ENCODE measurements at regions of chr14 and their contacts with region 1.

Region 1: DNA sequence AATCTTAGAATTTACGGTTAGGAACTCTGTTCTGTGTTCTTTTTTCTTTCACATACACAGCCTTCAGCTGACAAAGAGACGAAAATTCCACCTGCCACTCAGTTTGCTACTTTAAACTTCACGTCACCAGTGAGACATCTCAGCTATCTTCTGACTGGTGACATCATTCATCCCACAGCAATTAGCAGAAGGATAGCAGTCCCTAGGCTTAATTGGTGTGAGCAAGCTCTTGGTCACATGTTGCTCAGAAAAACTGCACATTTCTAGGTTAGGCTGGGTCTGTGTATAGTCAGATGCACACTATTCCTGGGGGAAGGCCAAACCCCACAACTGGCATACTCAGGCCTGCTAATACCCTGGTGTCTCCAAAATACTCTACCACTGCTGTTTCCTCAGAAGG is 23.9 kb downstream of the SLC7A7 start:
- DNase-seq: peak; percentile 31
- ATAC-seq: no peak
- H3K4me3 ChIP-seq: no peak overlapping the region
- H3K4me3 Mint-ChIP-seq: peak overlapping the region; percentile 43
- H3K27ac ChIP-seq: peak overlapping the region; percentile 75 to 84
- H3K27ac Mint-ChIP-seq: peak overlapping the region; percentile 78
- H3K4me1 ChIP-seq: peaks cover 43 to 51% of the 10 kb centered on the region in 2 donors
- H3K4me1 Mint-ChIP-seq: peaks cover 59% of the 10 kb centered on the region
- H3K27me3 ChIP-seq: no peaks in the 10 kb centered on the region
- H3K27me3 Mint-ChIP-seq: no peaks in the 10 kb centered on the region
- CTCF ChIP-seq: no peak

Region 2: GRCh38 chr14:20836668-20837338 is 1954.5 kb before region 1 on chr14:
- CTCF ChIA-PET with region 1: no interaction called
- POLR2A ChIA-PET with region 1: no interaction called
- intact Hi-C with region 1: no loop called
- DNase-seq: no peak
- ATAC-seq: no peak
- H3K4me3 ChIP-seq: no peak overlapping the region
- H3K4me3 Mint-ChIP-seq: no peak overlapping the region
- H3K27ac ChIP-seq: no peak overlapping the region
- H3K27ac Mint-ChIP-seq: no peak overlapping the region
- H3K4me1 ChIP-seq: no peaks in the 10 kb centered on the region
- H3K4me1 Mint-ChIP-seq: no peaks in the 10 kb centered on the region
- H3K27me3 ChIP-seq: no peaks in the 10 kb centered on the region
- H3K27me3 Mint-ChIP-seq: no peaks in the 10 kb centered on the region
- CTCF ChIP-seq: no peak

Region 3: DNA sequence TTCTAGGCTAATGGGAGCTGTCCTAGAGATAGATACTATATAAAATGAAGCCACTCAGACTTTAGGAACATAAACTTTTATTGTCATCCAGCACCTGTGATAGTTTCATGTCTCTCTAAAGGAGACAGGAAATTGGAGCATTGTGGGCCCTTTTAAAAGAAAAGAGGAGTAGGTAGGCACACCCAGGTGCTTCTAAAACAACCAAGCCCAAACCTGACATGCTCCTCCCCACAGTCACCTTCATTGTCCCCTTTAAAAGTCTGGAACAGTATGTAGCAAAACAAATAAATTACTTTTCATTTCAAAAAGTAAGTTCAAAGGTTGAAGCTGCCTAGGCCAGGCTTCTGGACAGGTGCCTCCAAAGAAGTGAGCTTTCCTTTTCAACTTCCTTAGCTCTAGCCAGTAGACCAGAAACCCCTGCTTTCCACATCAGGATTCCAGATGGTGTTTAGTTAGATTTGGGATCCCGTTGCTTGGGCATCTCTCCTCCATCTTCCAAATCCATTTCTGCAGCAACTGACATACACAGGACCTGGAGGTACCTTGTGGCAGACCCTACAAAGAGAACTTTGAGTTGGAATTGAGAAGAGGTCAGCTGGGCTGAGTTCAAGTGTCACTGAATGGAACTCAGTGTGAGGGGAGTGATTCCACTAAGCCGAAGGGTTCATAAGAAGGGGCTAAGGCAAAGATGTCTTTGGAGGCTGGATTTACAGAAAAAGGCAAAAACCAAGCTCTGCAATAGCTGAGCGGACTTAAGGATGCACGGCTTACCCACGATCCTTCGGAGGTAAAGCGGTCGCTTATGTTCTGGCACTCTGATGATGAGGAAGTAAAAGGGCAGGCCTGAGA is 17.9 kb before region 1 on chr14:
- CTCF ChIA-PET with region 1: interaction called, 17 read pairs
- POLR2A ChIA-PET with region 1: interaction called, 3 read pairs
- intact Hi-C with region 1: loop called (anchors 2 kb)
- DNase-seq: no peak
- ATAC-seq: no peak
- H3K4me3 ChIP-seq: no peak overlapping the region
- H3K4me3 Mint-ChIP-seq: no peak overlapping the region
- H3K27ac ChIP-seq: peak overlapping the region in 1 of 2 donors; percentile 26
- H3K27ac Mint-ChIP-seq: peak overlapping the region; percentile 39
- H3K4me1 ChIP-seq: peaks cover 0 to 2% of the 10 kb centered on the region in 2 donors
- H3K4me1 Mint-ChIP-seq: peaks cover 12% of the 10 kb centered on the region
- H3K27me3 ChIP-seq: no peaks in the 10 kb centered on the region
- H3K27me3 Mint-ChIP-seq: no peaks in the 10 kb centered on the region
- CTCF ChIP-seq: no peak

Region 4: DNA sequence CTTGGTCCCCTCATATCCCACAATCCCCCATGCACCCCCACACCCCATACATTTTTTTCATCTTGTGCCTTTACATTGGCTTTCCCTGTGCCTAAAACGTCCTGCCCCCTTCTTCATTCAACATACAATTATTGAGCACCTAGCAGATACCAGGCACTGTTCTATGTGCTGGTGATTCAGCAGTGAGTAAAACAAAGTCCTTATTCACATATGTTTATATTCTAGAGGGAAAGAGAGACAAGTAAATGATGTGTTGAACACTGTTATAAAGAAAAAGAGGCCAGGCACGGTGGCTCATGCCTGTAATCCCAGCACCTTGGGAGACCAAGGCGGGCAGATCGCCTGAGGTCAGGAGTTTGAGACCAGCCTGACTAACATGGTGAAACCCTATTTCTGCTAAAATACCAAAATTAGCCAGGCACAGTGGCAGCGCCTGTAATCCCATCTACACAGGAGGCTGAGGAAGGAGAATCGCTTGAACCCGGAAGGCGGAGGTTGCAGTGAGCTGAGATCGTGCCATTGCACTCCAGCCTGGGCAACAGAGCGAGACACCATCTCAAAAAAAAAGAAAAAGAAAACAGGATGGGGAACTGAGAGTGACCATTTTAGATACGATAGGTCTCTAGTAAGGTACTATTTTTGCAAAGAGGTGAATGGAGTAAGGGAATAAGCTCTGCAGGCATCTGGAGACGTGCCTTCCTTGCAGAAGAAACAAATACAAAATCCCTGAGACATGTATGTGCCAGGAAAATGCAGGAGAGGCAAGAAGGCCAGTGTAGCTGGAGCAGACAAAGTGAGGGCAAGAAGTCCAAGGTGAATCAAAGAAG is 11.8 kb after region 1 on chr14:
- CTCF ChIA-PET with region 1: interaction called, 29 read pairs
- POLR2A ChIA-PET with region 1: interaction called, 9 read pairs
- intact Hi-C with region 1: loop called (anchors 1 kb)
- DNase-seq: peak; percentile 55
- ATAC-seq: peak; percentile 85
- H3K4me3 ChIP-seq: peak overlapping the region in 1 of 5 experiments; percentile 5
- H3K4me3 Mint-ChIP-seq: peak overlapping the region; percentile 82
- H3K27ac ChIP-seq: peak overlapping the region; percentile 1 to 71
- H3K27ac Mint-ChIP-seq: peak overlapping the region; percentile 94
- H3K4me1 ChIP-seq: peaks cover 25 to 47% of the 10 kb centered on the region in 2 donors
- H3K4me1 Mint-ChIP-seq: peaks cover 79% of the 10 kb centered on the region
- H3K27me3 ChIP-seq: no peaks in the 10 kb centered on the region
- H3K27me3 Mint-ChIP-seq: no peaks in the 10 kb centered on the region
- CTCF ChIP-seq: no peak

Region 5: GRCh38 chr14:22808388-22809209 is 17.3 kb after region 1 on chr14:
- CTCF ChIA-PET with region 1: interaction called, 29 read pairs
- POLR2A ChIA-PET with region 1: interaction called, 10 read pairs
- intact Hi-C with region 1: loop called (anchors 1 kb)
- DNase-seq: no peak
- ATAC-seq: no peak
- H3K4me3 ChIP-seq: no peak overlapping the region
- H3K4me3 Mint-ChIP-seq: peak overlapping the region; percentile 47
- H3K27ac ChIP-seq: peak overlapping the region in 1 of 2 donors; percentile 35
- H3K27ac Mint-ChIP-seq: peak overlapping the region; percentile 76
- H3K4me1 ChIP-seq: peaks cover 35 to 52% of the 10 kb centered on the region in 2 donors
- H3K4me1 Mint-ChIP-seq: peaks cover 72% of the 10 kb centered on the region
- H3K27me3 ChIP-seq: no peaks in the 10 kb centered on the region
- H3K27me3 Mint-ChIP-seq: no peaks in the 10 kb centered on the region
- CTCF ChIP-seq: no peak

Region 6: DNA sequence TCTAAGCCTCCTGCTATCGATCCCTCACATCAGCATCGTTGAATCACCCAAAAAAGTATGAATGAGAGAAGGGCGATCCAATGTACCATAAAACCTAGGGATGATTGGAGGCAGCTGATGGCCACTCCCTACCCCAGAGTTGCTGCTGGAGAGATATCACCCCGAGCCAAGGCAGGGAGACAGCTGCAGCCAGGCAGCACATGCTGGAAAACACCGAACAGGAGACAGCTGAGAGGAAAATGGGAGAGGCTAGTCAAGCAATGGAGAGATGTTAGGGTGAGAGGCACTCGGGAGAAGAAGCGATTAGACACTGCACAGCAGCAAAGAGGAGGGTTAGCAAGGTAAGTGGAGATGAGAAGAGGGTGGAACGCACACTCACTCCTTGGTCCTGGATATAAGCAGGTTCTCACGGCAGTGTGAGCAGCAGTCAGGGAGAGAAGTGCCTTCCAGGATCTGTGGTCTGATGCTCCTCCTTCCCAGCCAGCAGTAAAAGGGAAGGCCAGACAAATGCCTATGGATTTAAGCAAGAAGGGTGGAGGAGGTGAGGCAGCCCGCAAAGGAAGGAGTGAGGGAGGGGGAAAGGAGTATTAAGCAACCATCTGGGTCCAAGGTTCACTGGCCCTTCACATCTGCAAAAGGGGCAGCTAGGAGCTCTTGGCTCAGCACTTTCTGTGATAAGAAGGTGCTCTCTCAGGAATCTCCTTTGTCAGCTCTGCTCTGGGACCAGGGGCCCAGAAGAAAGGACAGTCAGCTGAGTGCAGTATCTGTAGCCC is 23.8 kb after region 1 on chr14 and contains the start of gene SLC7A7:
- CTCF ChIA-PET with region 1: interaction called, 10 read pairs
- POLR2A ChIA-PET with region 1: interaction called, 12 read pairs
- intact Hi-C with region 1: loop called (anchors 1 kb)
- DNase-seq: no peak
- ATAC-seq: no peak
- H3K4me3 ChIP-seq: peak within 1 kb of the TSS in 4 of 5 experiments; percentile 3 to 39 (median 13)
- H3K4me3 Mint-ChIP-seq: peak within 1 kb of the TSS; percentile 66
- H3K27ac ChIP-seq: peak within 1 kb of the TSS; percentile 63 to 71
- H3K27ac Mint-ChIP-seq: peak within 1 kb of the TSS; percentile 92
- H3K4me1 ChIP-seq: peaks cover 54 to 64% of the 10 kb centered on the region in 2 donors
- H3K4me1 Mint-ChIP-seq: peaks cover 73% of the 10 kb centered on the region
- H3K27me3 ChIP-seq: no peaks in the 10 kb centered on the region
- H3K27me3 Mint-ChIP-seq: no peaks in the 10 kb centered on the region
- CTCF ChIP-seq: no peak
- total RNA-seq, gene SLC7A7: 50.0 and 59.5 TPM in 2 replicates

Region 7: DNA sequence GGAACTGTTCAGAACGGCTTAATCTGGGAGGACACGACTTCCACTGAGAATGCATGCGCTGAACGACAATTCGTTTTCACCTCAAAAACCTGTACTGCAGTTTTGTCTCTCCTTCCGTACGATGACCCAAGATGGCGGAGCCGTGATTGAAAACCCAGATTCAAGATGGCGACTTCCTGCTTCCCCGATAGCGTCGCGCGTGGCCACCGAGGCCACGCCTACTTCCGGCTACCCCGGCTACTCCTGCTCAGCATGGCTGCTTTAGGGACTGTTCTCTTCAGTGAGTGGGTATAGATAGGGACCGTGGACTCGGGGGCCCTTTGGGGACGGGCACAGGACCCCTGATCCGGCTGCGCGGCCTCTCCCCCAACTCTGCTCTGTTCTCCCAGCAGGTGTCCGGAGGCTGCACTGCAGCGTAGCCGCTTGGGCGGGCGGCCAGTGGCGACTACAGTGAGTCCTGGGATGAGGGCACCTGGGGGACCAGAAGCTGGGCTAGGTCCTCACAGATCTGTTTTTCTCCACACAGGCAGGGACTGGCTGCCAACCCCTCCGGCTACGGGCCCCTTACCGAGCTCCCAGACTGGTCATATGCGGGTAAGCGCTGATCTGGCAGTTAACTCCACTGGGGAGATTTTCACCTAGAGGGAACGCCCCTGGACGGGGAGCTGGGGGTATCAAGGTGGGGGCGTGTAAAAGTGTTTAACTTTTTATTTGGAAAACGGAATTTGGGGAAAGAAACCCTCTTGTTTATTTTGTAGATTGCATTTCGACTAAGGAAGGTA is 38.6 kb after region 1 on chr14 and contains the start of gene MRPL52:
- CTCF ChIA-PET with region 1: interaction called, 29 read pairs
- POLR2A ChIA-PET with region 1: interaction called, 3 read pairs
- intact Hi-C with region 1: loop called (anchors 1 kb)
- DNase-seq: peak; percentile 95
- ATAC-seq: peak; percentile 94
- H3K4me3 ChIP-seq: peak within 1 kb of the TSS; percentile 68 to 92 (median 84)
- H3K4me3 Mint-ChIP-seq: peak within 1 kb of the TSS; percentile 84
- H3K27ac ChIP-seq: peak within 1 kb of the TSS; percentile 87 to 91
- H3K27ac Mint-ChIP-seq: peak within 1 kb of the TSS; percentile 93
- H3K4me1 ChIP-seq: peaks cover 18 to 22% of the 10 kb centered on the region in 2 donors
- H3K4me1 Mint-ChIP-seq: peaks cover 30% of the 10 kb centered on the region
- H3K27me3 ChIP-seq: no peaks in the 10 kb centered on the region
- H3K27me3 Mint-ChIP-seq: no peaks in the 10 kb centered on the region
- CTCF ChIP-seq: no peak
- total RNA-seq, gene MRPL52: 91.6 and 93.0 TPM in 2 replicates

Region 8: DNA sequence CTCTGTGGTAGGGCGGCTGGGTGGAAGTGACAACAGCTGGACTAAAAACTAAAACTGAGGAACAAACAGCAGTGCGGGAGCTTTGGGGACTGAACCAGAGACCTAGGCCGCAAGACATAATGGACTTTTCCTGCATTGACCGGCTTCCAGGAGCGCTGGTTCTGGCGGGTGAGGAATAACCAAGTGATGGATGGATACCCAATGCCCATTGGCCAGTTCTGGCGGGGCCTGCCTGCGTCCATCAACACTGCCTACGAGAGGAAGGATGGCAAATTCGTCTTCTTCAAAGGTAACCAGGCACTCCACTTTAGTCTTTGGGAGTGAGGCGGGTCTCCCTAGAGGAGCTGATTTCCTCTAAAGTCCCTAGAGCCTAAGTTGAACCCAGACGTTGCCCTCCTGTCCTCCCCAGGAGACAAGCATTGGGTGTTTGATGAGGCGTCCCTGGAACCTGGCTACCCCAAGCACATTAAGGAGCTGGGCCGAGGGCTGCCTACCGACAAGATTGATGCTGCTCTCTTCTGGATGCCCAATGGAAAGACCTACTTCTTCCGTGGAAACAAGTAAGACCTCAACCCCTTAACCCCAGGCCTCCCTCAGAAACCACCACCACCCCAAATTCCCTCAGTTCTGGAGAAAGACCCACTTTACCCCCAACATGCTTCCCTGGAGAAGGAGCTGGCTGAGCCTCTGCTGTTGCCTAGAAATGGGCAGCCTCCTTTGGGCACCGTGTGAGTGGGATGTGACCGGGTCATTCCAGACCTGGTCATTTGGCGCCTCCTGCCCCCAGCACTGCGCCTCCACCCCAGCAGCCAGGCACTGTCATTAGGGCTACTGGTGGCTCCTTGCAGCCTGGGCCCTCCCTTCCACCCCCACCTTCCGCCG is 53.2 kb after region 1 on chr14:
- CTCF ChIA-PET with region 1: no interaction called
- POLR2A ChIA-PET with region 1: interaction called, 12 read pairs
- intact Hi-C with region 1: no loop called
- DNase-seq: no peak
- ATAC-seq: no peak
- H3K4me3 ChIP-seq: no peak overlapping the region
- H3K4me3 Mint-ChIP-seq: no peak overlapping the region
- H3K27ac ChIP-seq: no peak overlapping the region
- H3K27ac Mint-ChIP-seq: no peak overlapping the region
- H3K4me1 ChIP-seq: no peaks in the 10 kb centered on the region
- H3K4me1 Mint-ChIP-seq: no peaks in the 10 kb centered on the region
- H3K27me3 ChIP-seq: peaks cover 0 to 21% (median under 1%) of the 10 kb centered on the region in 4 experiments
- H3K27me3 Mint-ChIP-seq: peaks cover 10% of the 10 kb centered on the region
- CTCF ChIP-seq: no peak